ENCODE measurements at regions of chr12 and their contacts with region 1.

Region 1: DNA sequence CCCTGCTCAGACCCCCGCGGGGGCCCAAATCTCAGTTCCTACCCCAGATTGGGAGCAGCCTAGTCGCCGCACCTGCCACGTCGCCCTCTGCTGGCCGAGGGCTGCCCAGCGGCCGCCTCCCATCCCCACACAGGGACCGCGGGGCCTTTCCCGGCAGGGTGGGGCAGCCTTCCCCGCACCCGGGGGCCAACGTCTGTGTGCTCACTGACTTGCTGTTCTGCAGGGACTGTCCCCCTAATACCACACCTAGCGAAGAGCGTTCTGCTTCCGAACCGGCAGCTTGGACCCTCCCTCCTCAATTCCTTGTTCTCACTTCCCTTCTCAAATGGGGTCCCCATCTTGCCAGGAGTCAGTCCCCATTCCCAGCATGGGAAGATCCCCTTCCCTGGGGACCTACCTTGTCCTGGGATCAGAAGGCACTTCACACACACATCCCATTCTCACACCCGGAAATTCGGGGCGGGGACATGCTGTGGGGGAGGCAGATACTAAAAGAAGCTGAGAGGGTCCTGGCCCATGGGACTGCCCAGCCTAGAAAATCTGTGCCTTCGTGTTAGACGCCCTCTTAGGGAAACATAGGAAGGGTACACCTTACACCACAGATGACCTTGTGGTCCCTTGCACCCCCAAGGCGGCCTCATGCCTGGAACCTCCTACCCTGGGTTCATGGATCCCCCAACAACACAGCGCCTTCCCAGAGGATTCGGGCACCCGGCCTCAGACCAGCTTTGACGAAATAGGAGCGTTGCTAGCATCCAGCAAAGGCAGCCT is 16.4 kb downstream of the ACVRL1 start:
- DNase-seq: peak; percentile 73 to 80
- ATAC-seq: peak in 7 of 8 donors; percentile 65 to 86 (median 85)
- H3K4me3 ChIP-seq: peak overlapping the region in 7 of 10 donors; percentile 4 to 37 (median 27)
- H3K27ac ChIP-seq: peak overlapping the region in 9 of 10 donors; percentile 63 to 89 (median 85)
- H3K4me1 ChIP-seq: peaks cover 10 to 57% (median 48%) of the 10 kb centered on the region in 9 donors
- H3K27me3 ChIP-seq: no peaks in the 10 kb centered on the region
- CTCF ChIP-seq: peak; percentile 84 to 96 (median 92)

Region 2: GRCh38 chr12:51886021-51886322 is 37.7 kb before region 1 on chr12:
- intact Hi-C with region 1: loop called in 2 of 10 experiments (anchors 5 kb)
- DNase-seq: peak; percentile 57 to 90
- ATAC-seq: peak; percentile 92 to 97 (median 96)
- H3K4me3 ChIP-seq: peak overlapping the region in 1 of 10 donors; percentile 30
- H3K27ac ChIP-seq: peak overlapping the region in 9 of 10 donors; percentile 17 to 81 (median 76)
- H3K4me1 ChIP-seq: peaks cover 3 to 30% (median 12%) of the 10 kb centered on the region in 9 donors
- H3K27me3 ChIP-seq: peaks cover 0 to 16% (median 0%) of the 10 kb centered on the region in 7 donors
- CTCF ChIP-seq: no peak

Region 3: GRCh38 chr12:51891843-51892242 is 31.8 kb before region 1 on chr12:
- intact Hi-C with region 1: loop called in 8 of 10 experiments (anchors 1 to 5 kb)
- DNase-seq: no peak
- ATAC-seq: no peak
- H3K4me3 ChIP-seq: no peak overlapping the region
- H3K27ac ChIP-seq: no peak overlapping the region
- H3K4me1 ChIP-seq: peaks cover 1 to 34% (median 22%) of the 10 kb centered on the region in 9 donors
- H3K27me3 ChIP-seq: peaks cover 0 to 16% (median 0%) of the 10 kb centered on the region in 7 donors
- CTCF ChIP-seq: peak in 8 of 9 donors; percentile 16 to 61 (median 48)

Region 4: GRCh38 chr12:51898937-51899336 is 24.7 kb before region 1 on chr12:
- intact Hi-C with region 1: loop called in 7 of 10 experiments (anchors 1 to 5 kb)
- DNase-seq: no peak
- ATAC-seq: peak in 1 of 8 donors; percentile 21
- H3K4me3 ChIP-seq: no peak overlapping the region
- H3K27ac ChIP-seq: peak overlapping the region in 3 of 10 donors; percentile 5 to 71 (median 41)
- H3K4me1 ChIP-seq: peaks cover 4 to 50% (median 40%) of the 10 kb centered on the region in 9 donors
- H3K27me3 ChIP-seq: no peaks in the 10 kb centered on the region
- CTCF ChIP-seq: no peak

Region 5: DNA sequence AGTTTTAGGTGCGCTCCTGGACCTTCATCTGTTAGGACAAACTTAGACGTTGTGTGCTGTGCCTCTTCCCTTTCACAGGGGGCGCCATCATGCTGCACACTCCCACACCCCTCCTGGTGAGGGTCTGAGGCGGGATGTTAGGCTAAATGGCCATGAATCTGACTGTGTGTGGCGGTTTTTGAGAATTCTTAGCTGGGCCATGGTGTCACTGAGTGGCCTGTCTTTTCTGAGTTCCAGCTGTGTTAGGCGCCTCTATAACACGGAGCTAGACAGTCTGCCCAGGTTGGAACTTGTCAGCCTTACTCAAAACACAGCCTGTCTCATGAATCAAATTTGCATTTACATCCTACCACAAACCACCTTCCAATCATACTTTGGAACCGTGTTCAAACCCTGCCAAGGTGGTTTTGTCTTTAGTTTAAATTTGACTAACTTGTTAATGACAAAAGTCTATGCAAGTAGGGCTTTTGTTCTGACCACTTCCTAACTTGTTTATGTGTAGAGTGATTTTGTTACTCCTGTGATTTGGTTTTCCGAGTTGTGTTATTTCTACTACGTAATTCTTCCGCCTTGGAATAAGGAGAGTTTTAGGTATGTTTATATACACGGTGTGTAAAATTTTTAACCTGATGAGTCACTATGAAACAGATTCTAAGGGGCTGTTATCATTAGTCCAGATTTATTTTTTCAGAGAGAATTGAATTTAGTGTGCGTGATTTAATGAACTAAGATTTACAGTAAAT is 47.4 kb after region 1 on chr12:
- intact Hi-C with region 1: loop called in 1 of 10 experiments (anchors 10 kb)
- DNase-seq: no peak
- ATAC-seq: no peak
- H3K4me3 ChIP-seq: no peak overlapping the region
- H3K27ac ChIP-seq: peak overlapping the region in 1 of 10 donors; percentile 87
- H3K4me1 ChIP-seq: peaks cover 0 to 63% (median 37%) of the 10 kb centered on the region in 9 donors
- H3K27me3 ChIP-seq: no peaks in the 10 kb centered on the region
- CTCF ChIP-seq: peak in 6 of 9 donors; percentile 18 to 58 (median 31)

Region 6: DNA sequence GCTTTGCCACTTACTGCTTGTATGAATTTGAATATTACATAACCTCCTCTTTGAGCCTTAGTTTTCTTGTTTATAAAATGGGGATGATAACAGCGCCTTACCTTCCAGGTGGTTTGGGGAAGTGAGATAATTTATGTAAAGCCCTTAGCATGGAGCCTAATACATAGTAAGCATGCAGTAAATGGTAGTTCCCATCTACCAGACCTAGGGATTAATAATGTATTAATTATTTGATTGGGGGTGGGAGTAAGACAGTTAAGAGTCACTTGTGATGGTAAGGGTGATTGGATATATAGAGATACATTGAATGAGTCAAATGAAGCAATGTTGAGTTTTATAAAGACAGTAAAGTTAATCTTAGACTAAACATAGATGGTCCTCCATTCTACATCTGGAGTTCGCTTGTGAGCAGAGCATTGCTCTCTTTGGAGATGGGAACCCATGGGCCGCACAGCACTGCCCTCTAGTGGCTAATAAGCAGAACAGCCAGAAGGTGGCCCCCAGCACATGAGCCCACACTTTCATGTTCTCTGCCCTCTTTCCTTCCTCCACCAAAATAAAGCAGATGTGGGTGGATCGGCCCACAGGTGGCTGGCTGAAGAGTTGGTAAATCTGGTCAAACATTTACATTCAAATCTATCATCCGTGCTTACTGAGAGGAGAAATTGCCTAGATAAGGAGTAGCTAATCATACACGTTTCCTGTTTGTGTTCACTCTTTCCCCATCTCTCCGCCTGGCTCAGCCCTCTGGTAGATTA is 56.5 kb after region 1 on chr12:
- intact Hi-C with region 1: loop called in 5 of 10 experiments (anchors 2 to 10 kb)
- DNase-seq: peak; percentile 40 to 60
- ATAC-seq: peak; percentile 86 to 95 (median 92)
- H3K4me3 ChIP-seq: no peak overlapping the region
- H3K27ac ChIP-seq: no peak overlapping the region
- H3K4me1 ChIP-seq: peaks cover 0 to 40% (median 0%) of the 10 kb centered on the region in 9 donors
- H3K27me3 ChIP-seq: no peaks in the 10 kb centered on the region
- CTCF ChIP-seq: peak; percentile 95 to 99 (median 97)

Region 7: GRCh38 chr12:52243856-52244614 is 320.3 kb after region 1 on chr12:
- intact Hi-C with region 1: no loop called
- DNase-seq: peak; percentile 56 to 64
- ATAC-seq: peak; percentile 58 to 87 (median 76)
- H3K4me3 ChIP-seq: no peak overlapping the region
- H3K27ac ChIP-seq: peak overlapping the region in 2 of 10 donors; percentile 17 to 64
- H3K4me1 ChIP-seq: peaks cover 0 to 31% (median 18%) of the 10 kb centered on the region in 9 donors
- H3K27me3 ChIP-seq: peaks cover 0 to 7% (median 1%) of the 10 kb centered on the region in 7 donors
- CTCF ChIP-seq: no peak